Endothelial cell of umbilical vein (primary cell): ENCODE measurements at regions of chr6 and their contacts with region 1.

Region 1: DNA sequence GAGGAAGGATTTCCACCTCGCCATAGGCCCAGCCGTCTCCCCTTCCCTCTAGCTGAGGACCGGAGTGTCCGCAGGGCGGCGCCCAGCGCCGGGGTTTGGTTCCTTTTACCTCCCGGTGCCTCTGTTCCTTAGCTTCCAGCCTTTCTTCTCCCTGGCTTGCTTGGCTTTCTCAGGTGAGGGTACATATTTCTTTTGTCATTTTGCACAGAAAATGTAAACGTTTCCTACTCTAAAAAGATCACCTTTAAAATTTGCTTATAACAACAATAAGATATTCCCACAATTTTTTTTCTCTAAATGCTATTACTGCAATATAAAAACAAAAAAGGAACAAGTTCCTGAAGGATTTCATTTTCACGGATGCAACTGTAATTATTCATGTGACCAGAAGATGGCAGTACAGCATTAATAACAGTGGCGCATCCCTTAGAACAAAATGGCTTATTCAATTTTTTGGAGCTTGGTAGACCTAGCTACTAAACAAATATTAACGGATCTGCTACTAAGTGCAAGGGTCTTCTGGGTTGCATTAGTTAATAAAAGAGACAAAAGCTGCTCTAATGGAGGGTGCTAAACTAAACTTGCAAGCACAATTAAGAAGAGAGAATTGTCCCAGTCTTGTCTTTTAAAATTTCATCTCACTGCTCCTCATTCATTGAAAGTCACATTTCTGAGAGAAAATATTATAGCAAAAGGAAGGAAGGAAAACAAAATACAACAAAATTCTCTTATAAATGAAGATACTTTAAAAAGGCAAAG is 172.9 kb downstream of the ADGRG6 start:
- DNase-seq: peak; percentile 71
- H3K4me3 ChIP-seq: no peak overlapping the region
- H3K27ac ChIP-seq: peak overlapping the region; percentile 1
- H3K4me1 ChIP-seq: peaks cover 2% of the 10 kb centered on the region
- H3K27me3 ChIP-seq: peaks cover 0 to 2% of the 10 kb centered on the region in 2 experiments
- CTCF ChIP-seq: peak; percentile 41 to 43
- POLR2A ChIP-seq: no peak

Region 2: DNA sequence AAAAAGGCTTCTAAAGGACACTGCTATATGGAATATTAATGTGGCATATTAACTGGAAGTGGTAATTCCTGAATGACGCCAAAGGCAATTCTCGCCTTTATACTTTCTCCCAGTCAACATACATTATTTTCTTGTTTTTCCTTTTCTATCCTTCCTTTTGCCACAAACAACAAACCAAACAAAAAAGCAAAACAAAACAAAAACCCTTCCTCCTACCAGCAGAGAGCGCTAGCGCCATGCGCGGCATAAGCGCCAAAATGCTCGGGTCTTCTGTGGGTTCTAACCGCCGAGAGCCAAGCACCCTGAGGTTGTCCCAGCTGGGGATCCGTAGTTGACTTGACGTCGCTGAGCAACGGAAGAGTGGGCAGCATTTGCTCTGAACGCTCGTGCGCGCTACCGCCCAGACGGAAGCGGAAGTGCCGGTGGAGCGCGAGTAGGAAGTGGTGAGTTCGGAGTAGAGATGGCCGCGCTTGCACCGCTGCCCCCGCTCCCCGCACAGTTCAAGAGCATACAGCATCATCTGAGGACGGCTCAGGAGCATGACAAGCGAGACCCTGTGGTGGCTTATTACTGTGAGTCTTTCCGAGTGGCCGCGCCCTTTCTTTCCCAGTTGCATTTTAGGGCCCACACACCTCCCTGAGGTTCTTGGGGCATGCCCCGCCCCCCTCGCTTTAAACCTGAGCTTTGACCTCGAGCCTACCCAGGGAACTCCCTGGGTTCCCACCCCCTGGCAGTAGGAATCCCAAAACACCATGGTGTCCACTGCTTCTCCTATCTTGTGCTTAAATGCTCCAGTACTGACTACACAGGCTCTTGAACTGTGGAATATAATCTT is 327.7 kb before region 1 on chr6 and contains the starts of genes NMBR and VTA1:
- CTCF ChIA-PET with region 1: interaction called, 13 read pairs
- POLR2A ChIA-PET with region 1: no interaction called
- dilution Hi-C with region 1: no loop called
- intact Hi-C with region 1: loop called (anchors 1 kb)
- DNase-seq: peak; percentile 99
- H3K4me3 ChIP-seq: peak within 1 kb of the TSS; percentile 77 to 92 (median 91)
- H3K27ac ChIP-seq: peak within 1 kb of the TSS; percentile 50
- H3K4me1 ChIP-seq: peaks cover 21% of the 10 kb centered on the region
- H3K27me3 ChIP-seq: no peaks in the 10 kb centered on the region
- CTCF ChIP-seq: peak; percentile 79 to 89
- POLR2A ChIP-seq: peak; percentile 90
- total RNA-seq, gene NMBR: not detected in 2 replicates
- total RNA-seq, gene VTA1: 40.9 and 45.8 TPM in 2 replicates

Region 3: GRCh38 chr6:142200846-142201628 is 273.7 kb before region 1 on chr6:
- CTCF ChIA-PET with region 1: no interaction called
- POLR2A ChIA-PET with region 1: no interaction called
- dilution Hi-C with region 1: no loop called
- intact Hi-C with region 1: no loop called
- DNase-seq: peak; percentile 83
- H3K4me3 ChIP-seq: no peak overlapping the region
- H3K27ac ChIP-seq: peak overlapping the region; percentile 78
- H3K4me1 ChIP-seq: peaks cover 38% of the 10 kb centered on the region
- H3K27me3 ChIP-seq: no peaks in the 10 kb centered on the region
- CTCF ChIP-seq: no peak
- POLR2A ChIP-seq: no peak

Region 4: GRCh38 chr6:142236691-142237090 is 238.0 kb before region 1 on chr6:
- CTCF ChIA-PET with region 1: interaction called, 4 read pairs
- POLR2A ChIA-PET with region 1: no interaction called
- dilution Hi-C with region 1: no loop called
- intact Hi-C with region 1: loop called (anchors 5 kb)
- DNase-seq: no peak
- H3K4me3 ChIP-seq: no peak overlapping the region
- H3K27ac ChIP-seq: no peak overlapping the region
- H3K4me1 ChIP-seq: no peaks in the 10 kb centered on the region
- H3K27me3 ChIP-seq: no peaks in the 10 kb centered on the region
- CTCF ChIP-seq: no peak
- POLR2A ChIP-seq: no peak

Region 5: DNA sequence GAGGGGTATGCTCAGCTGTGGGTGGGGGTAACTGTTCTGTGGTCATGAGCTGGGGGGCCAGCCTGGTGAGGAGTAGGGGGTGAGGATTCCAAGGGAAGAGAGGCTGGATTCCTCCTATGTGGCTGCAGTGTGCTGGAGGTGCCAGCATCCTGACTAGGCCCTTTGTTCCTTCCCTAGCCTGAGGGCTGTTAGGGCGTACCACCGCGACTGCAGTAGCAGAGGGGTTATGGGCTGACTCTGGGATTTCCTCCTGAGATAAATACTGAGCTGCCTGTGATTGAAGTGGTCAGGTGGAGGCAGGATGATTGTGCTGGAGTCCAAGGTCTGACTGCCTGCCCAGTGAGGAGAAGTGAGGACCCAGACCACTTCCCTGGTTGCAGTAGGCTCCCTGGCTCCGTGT is 32.4 kb after region 1 on chr6:
- CTCF ChIA-PET with region 1: interaction called, 10 read pairs
- POLR2A ChIA-PET with region 1: no interaction called
- dilution Hi-C with region 1: no loop called
- intact Hi-C with region 1: no loop called
- DNase-seq: no peak
- H3K4me3 ChIP-seq: no peak overlapping the region
- H3K27ac ChIP-seq: no peak overlapping the region
- H3K4me1 ChIP-seq: no peaks in the 10 kb centered on the region
- H3K27me3 ChIP-seq: peaks cover 5 to 10% of the 10 kb centered on the region in 2 experiments
- CTCF ChIP-seq: no peak
- POLR2A ChIP-seq: no peak

Region 6: GRCh38 chr6:142566628-142567396 is 92.1 kb after region 1 on chr6:
- CTCF ChIA-PET with region 1: interaction called, 28 read pairs
- POLR2A ChIA-PET with region 1: no interaction called
- dilution Hi-C with region 1: no loop called
- intact Hi-C with region 1: loop called (anchors 1 kb)
- DNase-seq: peak; percentile 62
- H3K4me3 ChIP-seq: no peak overlapping the region
- H3K27ac ChIP-seq: no peak overlapping the region
- H3K4me1 ChIP-seq: no peaks in the 10 kb centered on the region
- H3K27me3 ChIP-seq: peaks cover 2 to 16% of the 10 kb centered on the region in 2 experiments
- CTCF ChIP-seq: peak; percentile 82 to 85
- POLR2A ChIP-seq: no peak

Region 7: GRCh38 chr6:142819603-142820337 is 345.1 kb after region 1 on chr6:
- CTCF ChIA-PET with region 1: no interaction called
- POLR2A ChIA-PET with region 1: no interaction called
- dilution Hi-C with region 1: no loop called
- intact Hi-C with region 1: no loop called
- DNase-seq: peak; percentile 95
- H3K4me3 ChIP-seq: peak overlapping the region; percentile 16 to 71 (median 27)
- H3K27ac ChIP-seq: peak overlapping the region; percentile 93
- H3K4me1 ChIP-seq: peaks cover 16% of the 10 kb centered on the region
- H3K27me3 ChIP-seq: no peaks in the 10 kb centered on the region
- CTCF ChIP-seq: no peak
- POLR2A ChIP-seq: no peak

Region 8: GRCh38 chr6:143232849-143233248 is 758.1 kb after region 1 on chr6:
- CTCF ChIA-PET with region 1: interaction called, 14 read pairs
- POLR2A ChIA-PET with region 1: no interaction called
- dilution Hi-C with region 1: no loop called
- intact Hi-C with region 1: no loop called
- DNase-seq: peak; percentile 44
- H3K4me3 ChIP-seq: no peak overlapping the region
- H3K27ac ChIP-seq: no peak overlapping the region
- H3K4me1 ChIP-seq: no peaks in the 10 kb centered on the region
- H3K27me3 ChIP-seq: no peaks in the 10 kb centered on the region
- CTCF ChIP-seq: peak; percentile 52 to 65
- POLR2A ChIP-seq: no peak

Region 9: GRCh38 chr6:143427109-143427817 is 952.6 kb after region 1 on chr6:
- CTCF ChIA-PET with region 1: interaction called, 74 read pairs
- POLR2A ChIA-PET with region 1: no interaction called
- dilution Hi-C with region 1: no loop called
- intact Hi-C with region 1: loop called (anchors 1 kb)
- DNase-seq: peak; percentile 66
- H3K4me3 ChIP-seq: no peak overlapping the region
- H3K27ac ChIP-seq: no peak overlapping the region
- H3K4me1 ChIP-seq: no peaks in the 10 kb centered on the region
- H3K27me3 ChIP-seq: no peaks in the 10 kb centered on the region
- CTCF ChIP-seq: peak; percentile 93 to 96
- POLR2A ChIP-seq: no peak